Caco-2 (cell line): ENCODE measurements at regions of chr6 and their contacts with region 1.

Region 1: DNA sequence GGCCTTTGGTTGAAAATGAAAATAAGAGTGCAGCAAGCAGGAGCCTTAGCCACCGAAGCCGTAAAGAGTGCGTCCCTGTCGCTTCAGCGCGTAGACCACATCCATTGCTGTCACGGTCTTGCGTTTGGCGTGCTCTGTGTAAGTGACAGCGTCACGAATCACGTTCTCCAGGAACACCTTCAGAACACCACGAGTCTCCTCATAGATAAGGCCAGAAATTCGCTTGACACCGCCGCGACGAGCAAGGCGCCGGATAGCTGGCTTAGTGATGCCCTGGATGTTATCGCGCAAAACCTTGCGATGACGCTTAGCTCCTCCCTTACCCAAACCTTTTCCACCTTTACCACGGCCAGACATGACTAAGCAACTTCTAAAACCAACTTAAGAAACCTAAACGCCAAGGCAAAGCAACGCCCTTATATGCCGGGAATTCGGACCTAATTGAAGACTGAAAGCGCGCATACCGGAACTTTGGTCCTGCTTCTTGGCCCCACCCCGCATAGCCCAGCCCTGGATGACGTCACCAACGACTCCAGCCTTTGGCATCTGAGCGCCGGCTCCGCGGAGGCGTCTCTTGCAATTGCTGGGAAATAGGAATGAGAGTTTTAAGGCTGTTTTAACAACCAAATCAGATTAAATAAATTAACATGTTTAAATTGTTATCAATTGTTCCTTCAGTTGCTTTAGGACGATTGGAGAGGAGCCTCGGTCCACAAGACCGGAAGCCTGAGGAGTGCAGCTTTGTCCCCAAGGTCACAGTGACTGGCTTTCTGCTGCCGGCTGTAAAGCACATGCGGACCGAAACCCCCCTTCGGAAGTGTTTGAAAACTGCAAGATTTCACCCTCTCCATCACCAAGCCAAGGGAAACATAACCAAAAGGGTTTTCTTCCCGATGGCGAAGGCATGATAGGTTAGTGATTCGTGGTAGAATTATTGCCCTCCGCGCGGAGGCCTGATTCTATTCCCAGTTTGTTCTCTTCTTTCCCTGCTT is 79.6 kb upstream of the BTN3A2 start:
- DNase-seq: peak; percentile 97 to 99
- H3K4me3 ChIP-seq: peak overlapping the region; percentile 55
- H3K4me3 Mint-ChIP-seq: peak overlapping the region; percentile 82
- H3K27ac Mint-ChIP-seq: peak overlapping the region; percentile 100
- H3K4me1 ChIP-seq: no peaks in the 10 kb centered on the region
- H3K4me1 Mint-ChIP-seq: peaks cover 17% of the 10 kb centered on the region
- H3K27me3 ChIP-seq: no peaks in the 10 kb centered on the region
- H3K27me3 Mint-ChIP-seq: peaks cover 6% of the 10 kb centered on the region
- CTCF ChIP-seq: no peak

Region 2: DNA sequence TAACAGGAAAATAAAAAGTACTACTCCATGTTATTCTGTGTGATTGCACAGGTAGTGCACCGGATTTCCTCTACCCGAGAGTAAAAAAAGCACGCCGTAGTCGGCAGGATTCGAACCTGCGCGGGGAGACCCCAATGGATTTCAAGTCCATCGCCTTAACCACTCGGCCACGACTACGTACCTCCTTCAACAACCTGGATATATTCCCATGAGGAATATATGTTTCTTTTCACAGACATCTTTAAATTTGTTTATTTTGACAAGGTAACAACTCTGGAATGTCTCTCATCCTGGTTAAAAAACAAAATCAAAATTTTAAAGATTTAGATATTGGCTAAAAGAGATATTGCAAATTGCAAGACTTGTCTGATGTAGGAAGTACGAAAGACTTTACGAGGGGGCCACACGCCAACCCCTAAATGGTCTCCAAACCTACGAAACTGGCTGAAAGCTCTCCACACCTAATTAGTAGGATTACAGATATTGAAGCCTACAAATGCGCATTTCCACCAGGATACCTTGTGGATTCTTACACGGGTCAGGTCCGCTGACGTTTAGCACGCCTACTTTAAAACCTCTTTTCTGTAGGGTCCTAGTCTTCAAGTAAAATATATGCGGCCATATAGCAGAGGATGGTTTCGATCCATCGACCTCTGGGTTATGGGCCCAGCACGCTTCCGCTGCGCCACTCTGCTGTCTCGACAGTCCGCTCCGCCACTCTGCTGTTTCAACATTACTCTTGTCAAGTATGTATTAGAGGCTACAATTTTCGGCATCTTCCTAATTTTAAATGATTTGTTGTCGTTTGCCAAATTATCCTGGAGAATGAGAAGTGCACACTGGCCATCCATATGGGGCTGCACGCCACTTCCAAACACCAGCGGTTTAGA is 27.3 kb after region 1 on chr6:
- CTCF ChIA-PET with region 1: no interaction called
- POLR2A ChIA-PET with region 1: no interaction called
- intact Hi-C with region 1: loop called (anchors 1 kb)
- DNase-seq: peak; percentile 84
- H3K4me3 ChIP-seq: peak overlapping the region; percentile 65
- H3K4me3 Mint-ChIP-seq: peak overlapping the region; percentile 90
- H3K27ac Mint-ChIP-seq: peak overlapping the region; percentile 95
- H3K4me1 ChIP-seq: peaks cover 17% of the 10 kb centered on the region
- H3K4me1 Mint-ChIP-seq: peaks cover 39% of the 10 kb centered on the region
- H3K27me3 ChIP-seq: no peaks in the 10 kb centered on the region
- H3K27me3 Mint-ChIP-seq: no peaks in the 10 kb centered on the region
- CTCF ChIP-seq: no peak

Region 3: GRCh38 chr6:26363882-26364701 is 78.7 kb after region 1 on chr6:
- CTCF ChIA-PET with region 1: no interaction called
- POLR2A ChIA-PET with region 1: no interaction called
- intact Hi-C with region 1: no loop called
- DNase-seq: no peak
- H3K4me3 ChIP-seq: no peak overlapping the region
- H3K4me3 Mint-ChIP-seq: no peak overlapping the region
- H3K27ac Mint-ChIP-seq: no peak overlapping the region
- H3K4me1 ChIP-seq: no peaks in the 10 kb centered on the region
- H3K4me1 Mint-ChIP-seq: peaks cover 7% of the 10 kb centered on the region
- H3K27me3 ChIP-seq: no peaks in the 10 kb centered on the region
- H3K27me3 Mint-ChIP-seq: no peaks in the 10 kb centered on the region
- CTCF ChIP-seq: no peak

Region 4: GRCh38 chr6:26543953-26544352 is 258.5 kb after region 1 on chr6:
- CTCF ChIA-PET with region 1: interaction called, 3 read pairs
- POLR2A ChIA-PET with region 1: interaction called, 14 read pairs
- intact Hi-C with region 1: no loop called
- DNase-seq: no peak
- H3K4me3 ChIP-seq: no peak overlapping the region
- H3K4me3 Mint-ChIP-seq: no peak overlapping the region
- H3K27ac Mint-ChIP-seq: no peak overlapping the region
- H3K4me1 ChIP-seq: no peaks in the 10 kb centered on the region
- H3K4me1 Mint-ChIP-seq: peaks cover 7% of the 10 kb centered on the region
- H3K27me3 ChIP-seq: no peaks in the 10 kb centered on the region
- H3K27me3 Mint-ChIP-seq: no peaks in the 10 kb centered on the region
- CTCF ChIP-seq: peak; percentile 34 to 44

Region 5: DNA sequence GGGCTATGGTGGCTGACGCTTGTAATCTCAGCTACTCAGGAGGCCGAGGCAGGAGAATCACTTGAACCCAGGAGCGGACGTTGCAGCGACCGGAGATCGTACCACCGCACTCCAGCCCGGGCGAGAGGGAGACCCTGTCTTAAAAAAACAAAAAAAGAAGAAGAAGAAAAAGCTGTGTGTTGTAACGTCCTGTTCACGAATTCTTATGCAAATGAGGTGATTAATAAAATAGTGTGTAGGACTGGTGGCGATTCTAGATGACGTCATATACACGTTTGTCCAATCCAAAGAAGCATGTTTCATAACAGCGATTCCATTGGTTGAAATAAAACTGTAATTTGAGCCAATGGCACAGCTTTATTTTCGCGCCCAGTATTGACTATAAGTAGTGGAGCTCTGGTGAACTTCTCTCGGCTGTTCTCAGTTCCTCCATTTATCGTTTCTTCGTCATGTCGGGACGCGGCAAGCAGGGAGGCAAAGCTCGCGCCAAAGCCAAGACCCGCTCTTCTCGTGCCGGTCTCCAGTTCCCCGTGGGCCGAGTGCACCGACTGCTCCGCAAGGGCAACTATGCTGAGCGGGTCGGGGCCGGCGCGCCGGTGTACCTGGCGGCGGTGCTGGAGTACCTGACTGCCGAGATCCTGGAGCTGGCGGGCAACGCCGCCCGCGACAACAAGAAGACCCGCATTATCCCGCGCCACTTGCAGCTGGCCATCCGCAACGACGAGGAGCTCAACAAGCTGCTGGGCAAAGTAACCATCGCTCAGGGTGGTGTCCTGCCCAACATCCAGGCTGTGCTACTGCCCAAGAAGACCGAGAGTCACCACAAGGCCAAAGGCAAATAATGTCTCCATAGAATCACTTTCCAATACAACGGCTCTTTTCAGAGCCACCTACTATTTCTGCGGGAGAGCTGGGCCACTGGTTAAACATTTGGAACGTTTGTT is 1579.7 kb after region 1 on chr6:
- CTCF ChIA-PET with region 1: no interaction called
- POLR2A ChIA-PET with region 1: no interaction called
- intact Hi-C with region 1: loop called (anchors 5 kb)
- DNase-seq: peak; percentile 85 to 89
- H3K4me3 ChIP-seq: peak overlapping the region; percentile 49
- H3K4me3 Mint-ChIP-seq: peak overlapping the region; percentile 76
- H3K27ac Mint-ChIP-seq: peak overlapping the region; percentile 99
- H3K4me1 ChIP-seq: 0 out of 2 replicates have a peak, but pooled peaks cover 4% of the 10 kb centered on the region
- H3K4me1 Mint-ChIP-seq: peaks cover 12% of the 10 kb centered on the region
- H3K27me3 ChIP-seq: no peaks in the 10 kb centered on the region
- H3K27me3 Mint-ChIP-seq: peaks cover 9% of the 10 kb centered on the region
- CTCF ChIP-seq: no peak